Activated T-helper 2 cell treated with anti-CD3 and anti-CD28 coated beads, Interferon-gamma antibody, Interleukin-2, Interleukin-4, amounts not matched to agents 10 μg/mL and 5 μg/mL and 100 μg/mL, durations not matched to agents 14 hours and 24 hours and 36 hours (primary cell): ENCODE measurements at regions of chr11 and their contacts with region 1.

Region 1: DNA sequence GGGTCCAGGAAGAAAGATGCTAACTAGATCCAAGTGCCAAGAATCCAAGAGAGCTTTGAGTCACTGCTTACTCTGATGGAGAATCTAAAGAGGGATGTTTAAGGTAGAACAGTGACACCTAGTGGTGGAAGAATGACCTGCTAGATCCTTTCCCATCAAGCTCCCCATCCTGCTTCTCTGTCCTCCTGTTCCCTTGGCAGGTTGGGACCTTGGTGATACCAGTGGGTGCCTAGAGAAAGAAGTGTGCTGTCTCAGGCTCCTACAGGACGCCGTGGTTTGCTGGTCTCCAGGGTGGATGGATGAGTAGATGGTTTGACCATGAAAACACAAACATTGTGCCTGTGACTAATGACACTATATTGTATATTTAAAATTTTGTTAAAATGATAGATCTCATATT is 383.7 kb downstream of the TMEM135 start:
- DNase-seq: no peak
- H3K4me3 Mint-ChIP-seq: no peak overlapping the region
- H3K27ac Mint-ChIP-seq: no peak overlapping the region
- H3K4me1 Mint-ChIP-seq: no peaks in the 10 kb centered on the region
- H3K27me3 Mint-ChIP-seq: peaks cover 3% of the 10 kb centered on the region

Region 2: DNA sequence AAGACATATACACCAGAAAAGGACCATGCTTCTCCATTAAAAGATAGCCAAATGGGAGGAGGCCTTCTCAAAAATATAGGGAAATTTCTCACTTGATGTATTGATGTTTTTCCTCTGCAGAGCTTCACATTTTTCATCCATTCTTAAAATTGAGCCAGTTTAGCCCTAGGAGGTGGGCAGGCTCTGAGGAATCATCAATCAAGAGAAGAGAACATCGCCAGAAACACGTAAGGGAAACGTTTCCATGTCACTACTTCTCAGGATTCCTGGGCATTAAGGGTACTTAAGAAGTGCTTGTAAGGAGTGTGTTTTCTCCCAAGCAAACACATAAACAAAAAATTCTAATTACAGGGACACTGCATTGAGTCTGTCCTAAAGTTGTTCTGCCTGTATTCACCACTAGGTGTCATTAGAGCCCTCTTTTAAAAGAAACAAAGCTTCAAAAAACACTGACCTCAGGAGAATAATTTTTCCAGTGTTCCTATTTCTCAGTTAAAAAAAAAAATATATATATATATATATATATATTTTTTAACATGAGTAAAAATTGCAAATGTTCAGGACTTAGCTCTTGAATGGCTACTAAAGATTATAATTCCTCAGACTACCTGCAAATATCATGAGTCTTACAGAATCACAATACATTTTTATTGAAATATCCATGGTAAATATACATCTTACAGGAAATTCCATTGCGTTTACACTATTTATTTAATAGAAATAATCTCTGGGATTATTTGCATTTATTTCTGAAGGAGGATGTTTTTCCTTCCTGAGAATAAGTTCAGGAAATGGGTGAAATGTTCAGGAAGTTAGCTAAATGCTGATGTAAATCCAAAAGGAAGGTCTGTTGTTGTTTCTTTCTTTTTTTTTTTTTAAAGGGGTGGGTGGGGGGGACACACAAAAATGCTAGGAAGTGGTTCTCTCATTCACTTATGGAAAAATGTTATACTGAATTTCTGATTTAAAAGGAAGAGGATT is 482.2 kb before region 1 on chr11:
- intact Hi-C with region 1: loop called (anchors 2 kb)
- DNase-seq: no peak
- H3K4me3 Mint-ChIP-seq: no peak overlapping the region
- H3K27ac Mint-ChIP-seq: no peak overlapping the region
- H3K4me1 Mint-ChIP-seq: no peaks in the 10 kb centered on the region
- H3K27me3 Mint-ChIP-seq: peaks cover 8% of the 10 kb centered on the region

Region 3: GRCh38 chr11:87352759-87353707 is 68.4 kb before region 1 on chr11:
- intact Hi-C with region 1: loop called (anchors 1 kb)
- DNase-seq: peak; percentile 73
- H3K4me3 Mint-ChIP-seq: no peak overlapping the region
- H3K27ac Mint-ChIP-seq: no peak overlapping the region
- H3K4me1 Mint-ChIP-seq: peaks cover 7% of the 10 kb centered on the region
- H3K27me3 Mint-ChIP-seq: peaks cover 7% of the 10 kb centered on the region